HEK293T (cell line): ENCODE measurements at regions of chr10 and their contacts with region 1.

Region 1: DNA sequence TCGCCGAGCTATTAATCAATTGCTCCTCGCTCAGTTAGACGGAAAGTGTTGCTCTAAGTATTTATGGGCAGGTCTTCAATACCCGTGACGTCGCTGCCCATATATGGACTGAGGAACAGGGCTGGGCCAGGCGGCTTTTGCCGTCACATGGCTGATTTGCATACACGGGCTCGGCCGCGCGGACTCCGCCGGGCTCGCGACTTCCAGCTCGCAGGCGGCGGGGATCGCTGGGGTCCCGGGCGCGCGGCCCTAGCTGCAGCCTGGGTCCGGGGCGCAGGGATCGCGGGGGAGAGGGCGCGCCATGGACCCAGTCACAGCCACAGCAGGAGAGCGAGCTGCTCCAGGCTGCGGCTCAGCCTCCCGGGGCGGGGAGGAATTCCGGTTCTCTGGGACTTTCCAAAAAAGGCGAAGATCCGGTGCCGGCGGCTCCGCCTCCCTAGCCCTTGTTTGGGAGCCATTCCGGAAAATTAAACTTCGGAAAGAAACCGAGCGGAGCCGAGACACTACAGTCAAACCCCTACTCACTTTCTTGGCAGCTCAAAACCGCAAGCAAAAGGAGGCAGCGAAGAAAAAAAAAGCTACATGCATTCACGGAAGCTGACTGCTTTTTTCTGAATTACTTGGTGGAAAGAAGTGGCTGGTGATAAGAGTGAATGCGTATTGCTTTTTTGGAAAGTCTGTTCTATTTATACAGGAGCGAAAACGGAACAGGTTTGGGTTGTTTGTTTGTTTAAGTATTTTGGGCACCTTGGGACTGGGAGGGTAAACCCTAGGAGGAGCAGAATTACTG is at the start of gene EGR2:
- DNase-seq: peak; percentile 83

Region 2: GRCh38 chr10:62610649-62611229 is 205.8 kb before region 1 on chr10:
- CTCF ChIA-PET with region 1: interaction called, 12 read pairs
- POLR2A ChIA-PET with region 1: interaction called, 3 read pairs
- DNase-seq: peak; percentile 61

Region 3: GRCh38 chr10:62804356-62805230 is 11.9 kb before region 1 on chr10 and contains the start of gene ADO:
- CTCF ChIA-PET with region 1: interaction called, 12 read pairs
- POLR2A ChIA-PET with region 1: interaction called, 21 read pairs
- DNase-seq: peak; percentile 80